ENCODE measurements at regions of chr1 and their contacts with region 1.

Region 1: GRCh38 chr1:25022361-25023189 is 92.5 kb upstream of the RUNX3 start:
- DNase-seq: peak; percentile 84
- ATAC-seq: peak; percentile 79
- H3K4me3 Mint-ChIP-seq: peak overlapping the region; percentile 52
- H3K27ac Mint-ChIP-seq: peak overlapping the region; percentile 91
- H3K4me1 Mint-ChIP-seq: peaks cover 71% of the 10 kb centered on the region
- H3K27me3 Mint-ChIP-seq: no peaks in the 10 kb centered on the region
- CTCF ChIP-seq: no peak

Region 2: GRCh38 chr1:24946861-24947658 is 75.5 kb before region 1 on chr1:
- CTCF ChIA-PET with region 1: interaction called, 6 read pairs
- POLR2A ChIA-PET with region 1: interaction called, 28 read pairs
- intact Hi-C with region 1: no loop called
- DNase-seq: no peak
- ATAC-seq: peak; percentile 75
- H3K4me3 Mint-ChIP-seq: no peak overlapping the region
- H3K27ac Mint-ChIP-seq: peak overlapping the region; percentile 65
- H3K4me1 Mint-ChIP-seq: peaks cover 46% of the 10 kb centered on the region
- H3K27me3 Mint-ChIP-seq: no peaks in the 10 kb centered on the region
- CTCF ChIP-seq: no peak

Region 3: DNA sequence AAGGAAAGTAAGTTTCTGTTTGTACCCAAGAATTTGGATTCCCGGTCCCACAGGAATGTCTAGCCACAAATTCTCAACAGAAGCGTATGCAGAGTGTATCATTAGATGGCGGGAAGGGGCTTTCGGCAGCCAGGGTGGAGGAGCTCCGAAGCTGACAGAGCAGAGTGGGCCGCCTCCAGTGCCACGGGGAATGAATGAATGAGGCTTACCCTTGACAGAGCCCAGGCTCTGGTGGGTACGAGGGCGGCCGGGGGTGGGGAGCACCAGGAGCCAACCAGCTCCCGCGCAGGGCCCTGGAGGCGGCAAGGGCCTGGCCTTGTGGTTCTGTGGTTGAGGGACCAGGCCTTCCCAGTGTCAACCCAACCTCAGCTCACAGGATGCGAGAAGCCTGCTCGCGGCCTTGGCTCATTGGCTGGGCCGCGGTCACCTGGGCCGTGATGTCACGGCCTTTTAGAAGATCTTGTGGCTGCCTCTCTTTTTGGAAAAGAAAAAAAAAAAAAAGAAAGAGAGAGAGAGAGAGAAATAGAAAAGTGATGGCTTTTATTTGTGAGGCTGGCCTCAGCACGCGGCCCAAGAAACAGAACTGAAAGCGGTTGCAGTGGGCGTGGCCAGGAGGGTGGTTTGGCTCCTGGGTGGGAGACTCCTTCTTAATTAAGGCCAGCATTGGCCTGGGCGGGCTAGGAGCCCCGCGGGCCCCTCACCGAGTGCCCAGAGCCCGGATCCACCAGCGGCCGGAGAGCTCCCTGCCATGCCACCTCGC is 57.6 kb before region 1 on chr1:
- CTCF ChIA-PET with region 1: no interaction called
- POLR2A ChIA-PET with region 1: interaction called, 88 read pairs
- intact Hi-C with region 1: loop called (anchors 1 kb)
- DNase-seq: peak; percentile 67
- ATAC-seq: peak; percentile 84
- H3K4me3 Mint-ChIP-seq: peak overlapping the region; percentile 76
- H3K27ac Mint-ChIP-seq: peak overlapping the region; percentile 88
- H3K4me1 Mint-ChIP-seq: peaks cover 57% of the 10 kb centered on the region
- H3K27me3 Mint-ChIP-seq: no peaks in the 10 kb centered on the region
- CTCF ChIP-seq: no peak

Region 4: DNA sequence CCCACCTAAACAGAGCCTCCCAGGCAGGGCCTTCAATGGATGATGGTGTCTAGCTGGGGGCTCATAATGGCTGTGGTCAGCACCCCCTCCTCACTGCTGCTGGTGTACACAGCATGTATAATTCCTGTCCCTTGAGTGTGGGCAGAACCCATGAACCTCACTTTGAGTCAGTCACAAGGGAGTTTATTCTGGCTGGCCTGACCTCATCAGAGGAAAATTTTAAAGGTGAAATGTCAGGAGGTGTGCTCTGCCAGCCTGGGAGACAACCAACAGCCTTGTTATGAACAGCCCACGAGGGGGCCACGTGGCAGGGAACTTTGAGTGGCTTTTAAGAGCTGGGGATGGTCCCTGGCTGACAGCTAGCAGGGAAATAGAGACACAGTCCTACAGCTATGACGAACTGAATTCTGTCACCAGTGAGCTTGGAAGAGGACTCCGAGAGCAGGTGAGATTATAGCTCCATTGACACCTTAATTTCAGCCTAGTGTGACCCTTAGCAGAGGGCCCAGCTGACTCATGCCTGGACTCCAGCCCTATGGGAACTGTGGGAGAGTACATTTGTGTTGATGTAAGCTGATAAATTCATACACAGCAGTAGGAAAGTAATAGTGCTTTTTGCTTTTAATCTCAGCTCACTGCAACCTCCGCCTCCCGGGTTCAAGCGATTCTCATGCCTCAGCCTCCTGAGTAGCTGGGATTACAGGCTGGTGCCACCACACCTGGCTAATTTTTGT is 19.0 kb before region 1 on chr1:
- CTCF ChIA-PET with region 1: interaction called, 3 read pairs
- POLR2A ChIA-PET with region 1: interaction called, 10 read pairs
- intact Hi-C with region 1: loop called (anchors 2 kb)
- DNase-seq: no peak
- ATAC-seq: peak; percentile 18
- H3K4me3 Mint-ChIP-seq: no peak overlapping the region
- H3K27ac Mint-ChIP-seq: no peak overlapping the region
- H3K4me1 Mint-ChIP-seq: peaks cover 17% of the 10 kb centered on the region
- H3K27me3 Mint-ChIP-seq: no peaks in the 10 kb centered on the region
- CTCF ChIP-seq: no peak

Region 5: DNA sequence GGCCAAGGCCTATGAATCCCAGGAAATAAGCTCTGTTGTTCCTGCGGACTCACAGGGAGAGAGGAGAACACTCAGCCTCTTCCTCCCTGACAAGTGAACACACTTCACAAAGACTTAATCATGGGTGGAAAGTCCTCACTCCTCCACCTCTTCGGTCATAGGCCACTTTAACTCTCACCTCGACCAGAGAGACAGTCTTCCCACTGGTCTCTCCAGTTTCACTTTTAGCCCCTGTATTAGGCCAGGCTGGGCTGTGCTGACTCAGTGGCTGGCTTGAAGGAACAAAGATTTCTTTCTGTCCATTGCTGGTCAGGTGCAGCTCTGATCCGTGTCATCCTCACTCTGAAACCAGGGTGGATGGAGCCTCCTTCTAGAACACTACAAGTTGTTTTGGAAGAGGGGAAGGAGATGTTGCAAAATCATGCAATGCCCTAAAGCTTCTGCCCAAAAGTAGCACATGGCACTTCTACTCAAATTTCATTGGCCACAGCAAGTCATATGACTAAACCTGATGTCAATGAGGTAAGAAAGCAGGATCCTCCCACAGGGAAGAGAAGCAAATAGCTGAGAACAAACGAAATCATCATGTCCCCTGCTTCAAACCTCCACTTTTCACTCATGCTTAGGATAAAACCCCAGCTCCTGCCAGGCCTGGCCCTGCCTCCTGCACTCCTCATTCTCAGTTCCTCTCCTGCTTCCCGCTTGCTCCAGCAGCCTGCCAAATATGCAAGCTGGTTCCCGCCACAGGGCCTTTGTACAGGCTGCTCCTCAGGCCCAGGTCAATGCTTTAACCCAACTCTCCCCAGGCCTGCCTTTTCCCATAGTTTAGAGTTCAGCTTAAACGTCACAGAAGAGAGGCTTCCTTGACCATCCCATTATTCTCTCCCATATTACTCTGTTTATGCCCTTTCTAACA is 58.0 kb after region 1 on chr1:
- CTCF ChIA-PET with region 1: no interaction called
- POLR2A ChIA-PET with region 1: no interaction called
- intact Hi-C with region 1: no loop called
- DNase-seq: no peak
- ATAC-seq: no peak
- H3K4me3 Mint-ChIP-seq: no peak overlapping the region
- H3K27ac Mint-ChIP-seq: no peak overlapping the region
- H3K4me1 Mint-ChIP-seq: no peaks in the 10 kb centered on the region
- H3K27me3 Mint-ChIP-seq: no peaks in the 10 kb centered on the region
- CTCF ChIP-seq: no peak

Region 6: GRCh38 chr1:25099343-25099951 is 76.9 kb after region 1 on chr1:
- CTCF ChIA-PET with region 1: no interaction called
- POLR2A ChIA-PET with region 1: interaction called, 15 read pairs
- intact Hi-C with region 1: no loop called
- DNase-seq: no peak
- ATAC-seq: peak; percentile 18
- H3K4me3 Mint-ChIP-seq: no peak overlapping the region
- H3K27ac Mint-ChIP-seq: no peak overlapping the region
- H3K4me1 Mint-ChIP-seq: peaks cover 40% of the 10 kb centered on the region
- H3K27me3 Mint-ChIP-seq: no peaks in the 10 kb centered on the region
- CTCF ChIP-seq: no peak